Sigmoid colon (tissue), 7 donors: ENCODE measurements at regions of chr10 and their contacts with region 1.

Region 1: DNA sequence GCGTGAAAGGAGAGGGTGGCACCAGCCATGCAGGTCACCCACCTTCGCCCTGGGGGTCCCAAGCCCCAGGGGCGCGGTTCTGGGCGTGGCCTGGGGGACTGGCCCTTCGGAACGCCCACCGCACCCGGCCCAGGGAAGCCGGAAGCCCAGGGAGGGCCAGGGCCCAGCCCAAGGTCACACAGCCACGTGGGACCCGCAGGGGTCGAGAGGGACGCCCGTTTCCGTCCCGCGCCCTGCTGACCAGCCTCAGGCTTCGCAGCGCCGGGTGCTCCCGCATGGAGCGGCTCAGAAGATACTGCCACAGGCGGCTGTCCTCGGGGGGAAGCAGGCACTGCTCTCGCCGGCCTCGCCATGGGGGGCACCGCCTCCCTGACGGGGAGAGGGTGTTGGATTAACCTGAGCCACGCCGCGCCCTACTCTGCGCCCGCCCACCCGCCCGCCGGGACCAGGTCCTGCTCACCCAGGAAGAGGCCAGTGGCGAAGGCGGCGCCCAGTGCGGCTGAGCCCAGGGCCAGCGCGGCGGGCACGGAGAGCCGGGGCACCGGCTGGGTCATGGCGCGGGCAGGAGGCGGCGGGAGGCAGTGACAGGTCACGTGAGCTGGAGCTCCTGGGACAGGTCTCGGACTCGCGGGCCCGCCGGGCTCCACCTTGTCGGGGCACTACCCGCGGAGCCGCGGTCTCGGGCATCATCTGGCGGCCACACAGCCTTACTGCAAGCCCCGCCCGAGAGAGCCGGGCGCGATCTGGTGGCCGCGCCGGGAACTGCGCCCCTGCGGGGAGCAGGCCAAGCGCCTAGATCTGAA is at the start of gene COMTD1:
- DNase-seq: peak; percentile 97
- H3K4me3 ChIP-seq: peak within 1 kb of the TSS; percentile 62 to 82 (median 77)
- H3K27ac ChIP-seq: peak within 1 kb of the TSS; percentile 81 to 90 (median 82)
- H3K4me1 ChIP-seq: peaks cover 0 to 25% (median 17%) of the 10 kb centered on the region in 4 donors
- H3K27me3 ChIP-seq: no peaks in the 10 kb centered on the region
- CTCF ChIP-seq: peak; percentile 100
- EP300 ChIP-seq: no peak
- POLR2A ChIP-seq: no peak
- total RNA-seq, gene COMTD1: 7.8 to 11.4 (median 10.3) TPM

Region 2: DNA sequence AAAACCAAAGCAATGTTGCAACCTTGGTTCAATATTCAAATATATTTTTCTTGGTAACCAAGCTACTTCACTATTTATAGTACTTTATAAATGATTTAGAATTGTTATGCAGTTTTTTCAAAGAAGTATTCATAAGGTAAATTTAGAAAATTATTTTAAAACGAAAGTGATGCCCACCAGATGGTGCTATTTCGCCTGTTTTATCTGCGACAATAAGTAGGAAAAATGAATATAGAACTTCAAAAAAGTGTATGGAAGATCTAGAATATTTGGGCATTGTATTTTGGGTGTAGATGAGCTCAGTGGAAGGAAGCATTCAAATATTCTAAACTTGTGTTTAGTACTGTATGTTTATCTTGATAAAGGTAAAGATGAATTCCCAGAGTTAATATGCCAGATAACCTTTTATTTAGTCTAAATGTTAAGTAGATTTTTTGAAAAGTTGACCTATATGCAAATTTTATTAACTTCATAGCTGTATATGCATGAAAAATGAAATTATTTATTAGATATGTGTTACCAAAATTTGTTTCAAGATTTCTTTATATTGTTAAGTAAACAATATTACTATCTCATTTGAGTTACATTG is 991.4 kb before region 1 on chr10:
- intact Hi-C with region 1: loop called (anchors 1 kb)
- DNase-seq: no peak
- H3K4me3 ChIP-seq: no peak overlapping the region
- H3K27ac ChIP-seq: no peak overlapping the region
- H3K4me1 ChIP-seq: no peaks in the 10 kb centered on the region
- H3K27me3 ChIP-seq: no peaks in the 10 kb centered on the region
- CTCF ChIP-seq: peak in 2 of 4 experiments; percentile 27 to 46
- EP300 ChIP-seq: no peak
- POLR2A ChIP-seq: no peak

Region 3: GRCh38 chr10:74262856-74263255 is 972.7 kb before region 1 on chr10:
- intact Hi-C with region 1: loop called (anchors 5 kb)
- DNase-seq: no peak
- H3K4me3 ChIP-seq: no peak overlapping the region
- H3K27ac ChIP-seq: no peak overlapping the region
- H3K4me1 ChIP-seq: peaks cover 0 to 5% (median 2%) of the 10 kb centered on the region in 4 donors
- H3K27me3 ChIP-seq: no peaks in the 10 kb centered on the region
- CTCF ChIP-seq: no peak
- EP300 ChIP-seq: no peak
- POLR2A ChIP-seq: no peak

Region 4: DNA sequence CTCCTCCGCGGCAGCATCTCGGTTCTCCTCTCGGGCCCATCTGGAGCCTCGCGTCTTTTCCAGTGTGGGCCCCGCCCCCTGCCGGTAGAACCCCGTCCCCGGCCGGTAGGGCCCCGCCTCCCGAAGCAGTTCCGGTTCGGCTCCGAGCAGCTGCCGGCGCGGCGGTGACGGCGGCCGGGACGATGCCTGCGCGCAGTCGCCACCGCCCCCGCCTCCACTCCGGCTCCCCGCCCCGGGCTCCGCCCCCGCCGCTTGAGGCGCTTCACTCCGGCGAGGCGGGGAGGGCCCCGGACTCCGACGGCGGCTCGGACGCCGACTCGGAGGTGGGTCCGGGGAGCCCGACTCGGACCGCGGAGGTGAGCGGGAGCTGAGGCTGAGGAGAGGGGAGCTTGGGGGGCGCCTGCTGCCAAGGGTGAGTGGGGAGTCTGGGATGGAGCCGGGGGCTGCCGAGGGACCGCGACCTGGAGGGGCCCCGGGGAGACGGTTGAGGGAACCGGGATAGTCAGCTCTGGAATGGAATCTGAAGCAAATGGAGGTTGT is 124.1 kb before region 1 on chr10 and contains the start of gene SAMD8:
- intact Hi-C with region 1: loop called (anchors 1 kb)
- DNase-seq: peak; percentile 99
- H3K4me3 ChIP-seq: peak within 1 kb of the TSS; percentile 69 to 97 (median 84)
- H3K27ac ChIP-seq: peak within 1 kb of the TSS; percentile 95 to 99 (median 97)
- H3K4me1 ChIP-seq: peaks cover 0 to 34% (median 21%) of the 10 kb centered on the region in 4 donors
- H3K27me3 ChIP-seq: no peaks in the 10 kb centered on the region
- CTCF ChIP-seq: peak in 2 of 4 experiments; percentile 25 to 39
- EP300 ChIP-seq: no peak
- POLR2A ChIP-seq: peak; percentile 84 to 94
- total RNA-seq, gene SAMD8: 25.0 to 37.5 (median 28.8) TPM

Region 5: GRCh38 chr10:75187961-75188426 is 47.6 kb before region 1 on chr10:
- intact Hi-C with region 1: loop called (anchors 1 kb)
- DNase-seq: no peak
- H3K4me3 ChIP-seq: no peak overlapping the region
- H3K27ac ChIP-seq: peak overlapping the region in 1 of 4 donors; percentile 11
- H3K4me1 ChIP-seq: peaks cover 0 to 19% (median 16%) of the 10 kb centered on the region in 4 donors
- H3K27me3 ChIP-seq: no peaks in the 10 kb centered on the region
- CTCF ChIP-seq: peak; percentile 49 to 74 (median 56)
- EP300 ChIP-seq: no peak
- POLR2A ChIP-seq: no peak

Region 6: GRCh38 chr10:75210282-75211006 is 25.1 kb before region 1 on chr10 and contains the start of gene VDAC2:
- intact Hi-C with region 1: loop called (anchors 2 kb)
- DNase-seq: peak; percentile 95
- H3K4me3 ChIP-seq: peak within 1 kb of the TSS; percentile 70 to 96 (median 76)
- H3K27ac ChIP-seq: peak within 1 kb of the TSS; percentile 99 to 100 (median 100)
- H3K4me1 ChIP-seq: peaks cover 0 to 64% (median 52%) of the 10 kb centered on the region in 4 donors
- H3K27me3 ChIP-seq: no peaks in the 10 kb centered on the region
- CTCF ChIP-seq: no peak
- EP300 ChIP-seq: no peak
- POLR2A ChIP-seq: peak; percentile 68 to 83
- total RNA-seq, gene VDAC2: 205 to 253 (median 232) TPM